ENCODE measurements at regions of chr1 and their contacts with region 1.

Region 1: GRCh38 chr1:183580281-183580682 is 10.0 kb downstream of the NCF2 start:
- DNase-seq: peak; percentile 84 to 98 (median 95)
- H3K4me3 ChIP-seq: no peak overlapping the region
- H3K27ac ChIP-seq: no peak overlapping the region
- H3K4me1 ChIP-seq: peaks cover 5 to 76% (median 19%) of the 10 kb centered on the region in 4 experiments
- H3K27me3 ChIP-seq: no peaks in the 10 kb centered on the region

Region 2: GRCh38 chr1:183443011-183443410 is 137.3 kb before region 1 on chr1:
- CTCF ChIA-PET with region 1: no interaction called
- POLR2A ChIA-PET with region 1: no interaction called
- DNase-seq: no peak
- H3K4me3 ChIP-seq: no peak overlapping the region
- H3K27ac ChIP-seq: no peak overlapping the region
- H3K4me1 ChIP-seq: no peaks in the 10 kb centered on the region
- H3K27me3 ChIP-seq: peaks cover 0 to 5% (median 0%) of the 10 kb centered on the region in 5 experiments

Region 3: DNA sequence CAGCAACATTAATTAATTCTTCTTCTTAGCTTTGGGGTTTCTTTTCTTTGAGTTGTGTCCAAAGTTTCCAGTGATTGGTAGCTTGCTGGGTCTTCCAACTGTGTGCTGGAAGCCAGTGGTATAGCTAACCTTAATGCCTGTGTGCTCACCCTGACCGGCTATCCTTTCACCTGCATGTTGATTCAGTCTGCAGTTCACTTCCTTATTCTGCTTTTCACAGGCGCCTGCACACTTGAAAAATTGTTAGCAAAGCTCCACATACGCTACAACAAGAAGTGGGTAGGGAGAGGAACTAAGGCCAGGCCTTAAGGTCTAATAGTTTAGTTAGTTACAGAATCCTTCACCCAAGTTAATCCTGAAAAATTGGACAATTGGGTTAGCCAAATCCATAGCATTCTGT is 25.7 kb before region 1 on chr1:
- CTCF ChIA-PET with region 1: interaction called, 10 read pairs
- POLR2A ChIA-PET with region 1: no interaction called
- DNase-seq: peak in 2 of 3 donors; percentile 33 to 36
- H3K4me3 ChIP-seq: no peak overlapping the region
- H3K27ac ChIP-seq: no peak overlapping the region
- H3K4me1 ChIP-seq: peaks cover 0 to 18% (median 0%) of the 10 kb centered on the region in 4 experiments
- H3K27me3 ChIP-seq: no peaks in the 10 kb centered on the region

Region 4: GRCh38 chr1:183567584-183567983 is 12.7 kb before region 1 on chr1:
- CTCF ChIA-PET with region 1: interaction called, 28 read pairs
- POLR2A ChIA-PET with region 1: no interaction called
- DNase-seq: peak; percentile 88 to 98 (median 97)
- H3K4me3 ChIP-seq: peak overlapping the region in 1 of 7 experiments; percentile 8
- H3K27ac ChIP-seq: no peak overlapping the region
- H3K4me1 ChIP-seq: peaks cover 6 to 36% (median 25%) of the 10 kb centered on the region in 4 experiments
- H3K27me3 ChIP-seq: no peaks in the 10 kb centered on the region

Region 5: DNA sequence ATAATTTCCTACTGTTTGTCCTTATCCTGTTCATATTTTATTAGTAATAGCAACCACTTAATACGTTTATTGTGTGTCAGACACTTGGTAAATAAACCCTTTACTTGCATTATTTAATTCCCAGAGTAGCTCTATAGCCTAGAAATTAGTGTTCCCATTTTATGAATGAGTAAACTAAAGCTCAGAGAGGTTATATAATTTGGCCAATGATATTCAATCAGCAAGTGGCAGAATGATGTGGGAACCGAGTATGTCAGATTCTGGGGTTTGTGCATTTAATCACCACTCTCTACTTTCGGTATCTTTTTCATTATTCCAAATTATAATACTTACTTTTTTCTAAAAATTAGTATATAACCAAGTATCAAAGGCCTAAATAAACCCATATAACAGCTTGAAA is 61.9 kb after region 1 on chr1:
- CTCF ChIA-PET with region 1: no interaction called
- POLR2A ChIA-PET with region 1: no interaction called
- DNase-seq: no peak
- H3K4me3 ChIP-seq: no peak overlapping the region
- H3K27ac ChIP-seq: no peak overlapping the region
- H3K4me1 ChIP-seq: peaks cover 0 to 4% (median under 1%) of the 10 kb centered on the region in 4 experiments
- H3K27me3 ChIP-seq: no peaks in the 10 kb centered on the region

Measured in common myeloid progenitor, CD34-positive (primary cell).